PC-9 (cell line): ENCODE measurements at regions of chr4 and their contacts with region 1.

Region 1: GRCh38 chr4:150325872-150326271 is 247.6 kb downstream of the DCLK2 start:
- DNase-seq: no peak
- H3K4me3 ChIP-seq: no peak overlapping the region
- H3K27ac ChIP-seq: no peak overlapping the region
- H3K4me1 ChIP-seq: no peaks in the 10 kb centered on the region
- H3K27me3 ChIP-seq: no peaks in the 10 kb centered on the region
- CTCF ChIP-seq: no peak

Region 2: DNA sequence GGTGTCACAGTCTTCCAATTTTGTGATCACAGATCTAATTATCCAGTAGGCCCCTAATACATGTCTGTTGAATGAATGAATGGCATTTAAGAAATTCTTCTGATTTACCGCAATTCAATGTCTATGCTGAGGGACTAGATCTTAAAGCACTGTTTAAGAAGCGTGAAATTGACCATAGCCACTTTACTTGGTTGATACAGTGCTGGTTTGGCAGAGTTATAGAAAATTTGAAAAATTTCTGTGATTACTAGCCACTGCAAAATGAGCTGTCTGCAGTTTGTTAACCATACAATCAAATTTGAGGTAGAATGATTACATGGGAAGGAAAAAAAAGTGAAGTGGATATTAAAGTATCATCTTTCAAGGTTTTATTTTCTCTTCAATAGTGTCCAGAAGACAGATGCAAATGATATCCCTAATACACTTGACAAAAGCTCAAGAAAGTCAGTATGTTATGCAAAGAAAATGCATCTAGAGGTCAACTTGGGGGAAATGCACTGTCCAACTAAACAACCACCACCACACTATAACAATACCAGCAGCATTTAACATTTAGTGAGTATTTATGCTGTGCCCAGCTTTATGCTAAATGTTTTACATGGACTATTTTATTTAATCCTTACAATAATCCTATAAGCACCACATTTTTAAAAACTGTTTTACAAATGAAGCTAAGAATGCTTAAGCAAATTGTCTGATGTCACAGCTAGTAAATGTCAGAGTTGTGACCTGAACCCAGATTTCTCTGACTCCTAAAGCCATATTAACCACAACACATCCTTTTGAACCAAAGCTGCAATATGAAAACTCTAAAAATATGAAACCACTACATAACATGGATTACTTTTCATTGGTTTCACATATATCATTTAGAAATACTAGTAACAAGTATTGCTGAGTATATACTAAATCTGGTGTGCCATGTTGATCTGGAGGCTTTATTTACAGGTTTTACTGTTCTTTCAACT is 38.1 kb after region 1 on chr4:
- CTCF ChIA-PET with region 1: no interaction called
- POLR2A ChIA-PET with region 1: no interaction called
- intact Hi-C with region 1: no loop called
- DNase-seq: no peak
- H3K4me3 ChIP-seq: no peak overlapping the region
- H3K27ac ChIP-seq: no peak overlapping the region
- H3K4me1 ChIP-seq: no peaks in the 10 kb centered on the region
- H3K27me3 ChIP-seq: no peaks in the 10 kb centered on the region
- CTCF ChIP-seq: no peak

Region 3: GRCh38 chr4:150385606-150386005 is 59.7 kb after region 1 on chr4:
- CTCF ChIA-PET with region 1: no interaction called
- POLR2A ChIA-PET with region 1: no interaction called
- intact Hi-C with region 1: no loop called
- DNase-seq: peak in 1 of 2 experiments; percentile 2
- H3K4me3 ChIP-seq: no peak overlapping the region
- H3K27ac ChIP-seq: no peak overlapping the region
- H3K4me1 ChIP-seq: no peaks in the 10 kb centered on the region
- H3K27me3 ChIP-seq: no peaks in the 10 kb centered on the region
- CTCF ChIP-seq: no peak

Region 4: DNA sequence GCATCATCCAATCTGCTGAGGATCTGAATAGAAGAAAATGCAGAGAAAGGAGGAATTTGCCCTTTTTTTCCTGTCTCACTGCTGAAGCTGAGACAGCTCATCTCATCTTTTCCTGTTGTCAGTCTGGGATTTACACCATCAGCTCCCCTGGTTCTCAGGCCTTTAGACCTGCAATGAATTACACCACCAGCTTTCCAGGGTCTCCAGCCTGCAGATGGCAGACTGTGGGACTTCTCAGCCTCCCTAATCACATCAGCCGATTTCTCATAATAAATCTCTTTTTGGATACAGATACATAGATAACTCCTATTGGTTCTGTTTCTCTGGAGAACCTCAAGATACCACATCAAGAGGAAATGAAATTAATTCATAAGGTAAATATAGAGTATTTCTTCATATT is 121.5 kb after region 1 on chr4:
- CTCF ChIA-PET with region 1: no interaction called
- POLR2A ChIA-PET with region 1: no interaction called
- intact Hi-C with region 1: no loop called
- DNase-seq: no peak
- H3K4me3 ChIP-seq: no peak overlapping the region
- H3K27ac ChIP-seq: no peak overlapping the region
- H3K4me1 ChIP-seq: no peaks in the 10 kb centered on the region
- H3K27me3 ChIP-seq: no peaks in the 10 kb centered on the region
- CTCF ChIP-seq: no peak

Region 5: DNA sequence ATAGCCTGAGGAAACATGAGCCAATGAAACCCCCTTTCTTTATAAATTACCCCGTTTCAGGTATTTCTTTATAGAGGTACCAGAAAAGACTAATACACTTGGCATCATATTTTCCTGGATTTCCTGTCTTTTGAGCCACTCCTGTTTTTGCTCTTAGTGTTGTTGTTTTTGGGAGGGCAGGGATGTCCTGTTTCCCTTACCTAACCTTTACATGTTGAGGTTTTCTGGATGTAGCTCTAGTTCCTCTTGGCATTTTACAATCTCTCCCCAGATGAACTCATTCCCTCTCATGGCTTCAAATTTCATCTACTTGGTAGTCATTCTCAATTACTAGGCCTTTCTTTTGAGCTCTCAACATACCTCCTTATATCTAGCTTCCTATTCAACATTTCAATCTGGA is 152.0 kb after region 1 on chr4:
- CTCF ChIA-PET with region 1: no interaction called
- POLR2A ChIA-PET with region 1: interaction called, 12 read pairs
- intact Hi-C with region 1: no loop called
- DNase-seq: no peak
- H3K4me3 ChIP-seq: no peak overlapping the region
- H3K27ac ChIP-seq: no peak overlapping the region
- H3K4me1 ChIP-seq: no peaks in the 10 kb centered on the region
- H3K27me3 ChIP-seq: no peaks in the 10 kb centered on the region
- CTCF ChIP-seq: no peak